ENCODE measurements at regions of chr7 and their contacts with region 1.

Region 1: DNA sequence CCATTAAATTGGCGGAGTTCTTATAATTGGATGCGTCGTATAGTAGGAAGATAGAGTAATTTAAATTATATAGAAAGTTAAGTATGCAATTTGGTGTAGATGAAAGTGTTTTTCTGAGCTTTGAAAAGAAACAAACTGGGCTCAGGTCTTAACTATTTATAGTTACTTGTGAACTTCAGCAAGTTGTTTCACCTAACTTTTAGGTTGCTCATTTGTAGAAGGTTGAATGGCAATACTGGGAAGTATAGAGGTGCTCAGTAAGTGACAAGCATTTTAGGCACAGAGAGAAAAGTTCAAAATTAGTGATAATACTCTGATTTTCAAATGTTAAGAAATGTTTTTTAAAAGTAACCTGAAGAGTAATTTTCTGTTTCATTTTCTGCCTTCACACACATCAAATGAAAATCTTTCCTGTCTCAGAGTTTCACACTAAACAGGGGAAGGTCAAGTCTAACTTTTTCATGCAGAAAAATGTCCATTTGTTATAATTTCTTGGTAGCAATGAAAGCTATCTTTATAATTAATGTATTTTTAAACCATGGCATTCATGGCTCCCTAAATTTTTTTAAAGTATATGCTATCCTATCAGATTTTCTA is 146.5 kb downstream of the PHF14 start:
- DNase-seq: no peak
- H3K4me3 Mint-ChIP-seq: no peak overlapping the region
- H3K27ac Mint-ChIP-seq: peak overlapping the region; percentile 46
- H3K4me1 Mint-ChIP-seq: peaks cover 19% of the 10 kb centered on the region
- H3K27me3 Mint-ChIP-seq: no peaks in the 10 kb centered on the region

Region 2: DNA sequence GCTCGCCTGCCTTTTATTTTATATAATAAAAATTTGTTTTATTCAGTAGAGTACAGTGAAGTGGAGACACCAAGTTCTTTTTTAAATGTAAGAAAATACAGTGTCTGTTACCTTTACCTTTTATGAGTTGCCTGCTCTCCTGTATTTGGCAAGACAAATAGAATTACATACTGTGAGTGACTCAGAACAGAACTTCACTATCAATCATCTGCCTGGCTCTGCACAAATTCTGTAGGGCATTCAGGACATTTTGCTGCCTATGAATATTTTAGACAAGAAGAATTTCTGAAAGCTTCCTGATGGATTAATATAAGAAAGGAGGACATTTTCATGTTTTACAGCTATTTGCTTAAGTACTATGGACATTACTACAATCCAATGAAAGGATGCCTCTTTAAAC is 281.9 kb before region 1 on chr7:
- CTCF ChIA-PET with region 1: no interaction called
- POLR2A ChIA-PET with region 1: no interaction called
- intact Hi-C with region 1: no loop called
- DNase-seq: no peak
- H3K4me3 Mint-ChIP-seq: no peak overlapping the region
- H3K27ac Mint-ChIP-seq: no peak overlapping the region
- H3K4me1 Mint-ChIP-seq: no peaks in the 10 kb centered on the region
- H3K27me3 Mint-ChIP-seq: peaks cover 2% of the 10 kb centered on the region

Region 3: DNA sequence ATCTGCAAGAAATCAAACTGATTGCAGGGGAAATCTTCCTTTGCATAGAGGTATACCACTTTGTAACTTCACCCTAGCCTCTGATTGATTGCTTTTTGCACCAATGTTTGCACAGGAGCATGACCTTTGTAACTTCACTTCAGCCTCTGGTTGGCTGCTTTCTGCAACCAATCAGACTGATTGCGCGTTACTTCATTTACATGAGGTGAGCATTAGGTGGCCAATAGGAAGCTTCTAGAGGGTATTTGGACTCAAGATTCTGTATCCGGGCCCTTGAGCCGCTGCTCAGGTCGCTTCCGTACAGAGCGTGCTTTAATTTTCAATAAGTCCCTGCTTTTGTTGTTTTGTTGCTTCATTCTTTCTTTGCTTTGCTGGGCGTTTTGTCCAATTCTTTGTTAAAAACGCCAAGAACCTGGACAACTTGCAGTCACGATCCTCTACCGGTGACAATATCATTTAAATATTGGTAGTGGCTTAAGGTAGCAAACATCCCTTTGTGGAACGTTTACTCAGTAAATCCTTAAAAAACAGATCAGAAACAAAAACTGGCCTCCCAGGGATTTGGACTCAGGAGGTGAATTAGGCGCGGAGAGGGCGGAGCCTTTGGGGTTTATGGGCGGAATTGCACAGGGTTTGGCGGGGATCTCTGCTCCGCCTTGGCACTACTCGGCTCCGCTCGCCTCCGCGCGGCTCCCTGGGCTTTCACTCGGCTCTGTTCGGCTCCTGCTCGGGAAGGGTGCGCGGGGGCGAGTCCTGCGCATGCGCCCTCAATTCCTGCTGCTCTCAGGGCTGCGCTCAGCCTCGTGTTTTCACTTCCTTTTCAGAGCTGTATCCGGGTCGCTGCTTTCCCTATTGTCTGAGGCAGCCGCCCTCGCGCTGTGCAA is 146.9 kb before region 1 on chr7 and contains the start of gene PHF14:
- CTCF ChIA-PET with region 1: no interaction called
- POLR2A ChIA-PET with region 1: no interaction called
- intact Hi-C with region 1: loop called (anchors 1 kb)
- DNase-seq: peak; percentile 98
- H3K4me3 Mint-ChIP-seq: peak within 1 kb of the TSS; percentile 91
- H3K27ac Mint-ChIP-seq: peak within 1 kb of the TSS; percentile 90
- H3K4me1 Mint-ChIP-seq: peaks cover 37% of the 10 kb centered on the region
- H3K27me3 Mint-ChIP-seq: peaks cover 8% of the 10 kb centered on the region
- total RNA-seq, gene PHF14: 28.6 to 31.5 TPM

Region 4: GRCh38 chr7:11153694-11154093 is 33.5 kb after region 1 on chr7:
- CTCF ChIA-PET with region 1: no interaction called
- POLR2A ChIA-PET with region 1: no interaction called
- intact Hi-C with region 1: no loop called
- DNase-seq: no peak
- H3K4me3 Mint-ChIP-seq: no peak overlapping the region
- H3K27ac Mint-ChIP-seq: no peak overlapping the region
- H3K4me1 Mint-ChIP-seq: peaks cover 2% of the 10 kb centered on the region
- H3K27me3 Mint-ChIP-seq: no peaks in the 10 kb centered on the region

Region 5: GRCh38 chr7:11249799-11250198 is 129.6 kb after region 1 on chr7:
- CTCF ChIA-PET with region 1: no interaction called
- POLR2A ChIA-PET with region 1: no interaction called
- intact Hi-C with region 1: no loop called
- DNase-seq: no peak
- H3K4me3 Mint-ChIP-seq: no peak overlapping the region
- H3K27ac Mint-ChIP-seq: no peak overlapping the region
- H3K4me1 Mint-ChIP-seq: no peaks in the 10 kb centered on the region
- H3K27me3 Mint-ChIP-seq: peaks cover 6% of the 10 kb centered on the region

Region 6: GRCh38 chr7:11332186-11332864 is 212.2 kb after region 1 on chr7:
- CTCF ChIA-PET with region 1: no interaction called
- POLR2A ChIA-PET with region 1: no interaction called
- intact Hi-C with region 1: loop called (anchors 10 kb)
- DNase-seq: peak; percentile 43
- H3K4me3 Mint-ChIP-seq: no peak overlapping the region
- H3K27ac Mint-ChIP-seq: no peak overlapping the region
- H3K4me1 Mint-ChIP-seq: peaks cover 2% of the 10 kb centered on the region
- H3K27me3 Mint-ChIP-seq: no peaks in the 10 kb centered on the region